Right cardiac atrium (tissue), 5 donors: ENCODE measurements at regions of chr1 and their contacts with region 1.

Region 1: GRCh38 chr1:165914136-165914798 is 86.9 kb downstream of the UCK2 start:
- DNase-seq: no peak
- ATAC-seq: peak; percentile 71 to 77
- H3K4me3 ChIP-seq: no peak overlapping the region
- H3K27ac ChIP-seq: no peak overlapping the region
- H3K4me1 ChIP-seq: no peaks in the 10 kb centered on the region
- H3K27me3 ChIP-seq: no peaks in the 10 kb centered on the region

Region 2: GRCh38 chr1:165383067-165383466 is 531.2 kb before region 1 on chr1:
- intact Hi-C with region 1: loop called in 1 of 4 experiments (anchors 10 kb)
- DNase-seq: peak; percentile 57 to 70 (median 67)
- ATAC-seq: peak; percentile 70 to 78
- H3K4me3 ChIP-seq: no peak overlapping the region
- H3K27ac ChIP-seq: no peak overlapping the region
- H3K4me1 ChIP-seq: no peaks in the 10 kb centered on the region
- H3K27me3 ChIP-seq: no peaks in the 10 kb centered on the region

Region 3: DNA sequence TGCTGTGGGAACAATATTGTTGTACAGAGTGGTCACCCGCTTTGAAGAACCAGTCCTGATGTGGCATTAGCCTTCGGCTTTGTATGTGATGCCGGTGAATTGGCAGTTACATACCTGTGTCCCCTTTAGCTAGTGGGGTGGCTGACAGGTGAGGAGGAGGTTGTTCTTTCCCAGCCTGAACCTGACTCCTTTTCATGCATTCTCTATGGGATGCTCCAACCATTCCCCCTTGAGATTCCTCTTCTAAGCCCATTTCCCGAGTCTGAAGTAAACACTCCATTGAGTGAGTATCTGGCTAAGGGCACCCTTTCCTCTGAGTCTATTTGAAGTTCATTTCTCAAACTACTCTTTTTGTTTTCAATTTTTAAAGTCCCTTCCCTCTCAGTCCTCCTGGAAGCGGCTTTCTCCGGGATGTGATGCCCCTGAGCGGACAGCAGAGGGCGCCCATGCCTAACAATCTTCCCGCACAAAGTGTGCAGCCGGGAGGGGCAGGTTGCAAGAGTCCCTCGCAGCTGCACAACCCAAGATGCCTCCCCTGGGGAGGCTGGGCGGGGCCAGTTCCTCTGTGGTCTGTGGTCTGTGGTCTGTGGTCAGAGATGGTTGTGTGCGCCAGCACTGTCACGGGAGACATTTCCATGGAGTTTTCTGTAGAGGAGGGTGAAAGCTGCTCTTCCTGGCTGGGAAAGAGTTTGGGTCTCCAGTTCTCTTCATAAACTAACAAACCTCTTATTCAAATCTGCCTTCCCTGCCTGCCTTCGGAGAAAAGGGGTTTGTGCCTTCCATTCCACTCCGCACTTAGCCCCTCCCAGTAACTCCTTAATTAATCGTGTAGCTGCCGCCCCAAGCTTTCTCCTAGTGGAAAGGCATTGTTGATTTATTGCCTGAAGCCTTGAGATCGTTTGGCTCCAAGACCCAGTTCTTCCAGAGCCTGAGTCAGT is 521.4 kb before region 1 on chr1:
- intact Hi-C with region 1: loop called (anchors 10 kb)
- DNase-seq: peak; percentile 85 to 92 (median 91)
- ATAC-seq: peak; percentile 89 to 92
- H3K4me3 ChIP-seq: no peak overlapping the region
- H3K27ac ChIP-seq: no peak overlapping the region
- H3K4me1 ChIP-seq: no peaks in the 10 kb centered on the region
- H3K27me3 ChIP-seq: no peaks in the 10 kb centered on the region

Region 4: GRCh38 chr1:165600793-165601192 is 313.5 kb before region 1 on chr1:
- intact Hi-C with region 1: loop called (anchors 2 to 10 kb)
- DNase-seq: no peak
- ATAC-seq: no peak
- H3K4me3 ChIP-seq: no peak overlapping the region
- H3K27ac ChIP-seq: no peak overlapping the region
- H3K4me1 ChIP-seq: no peaks in the 10 kb centered on the region
- H3K27me3 ChIP-seq: no peaks in the 10 kb centered on the region

Region 5: GRCh38 chr1:165717918-165718515 is 196.2 kb before region 1 on chr1:
- intact Hi-C with region 1: loop called (anchors 5 to 10 kb)
- DNase-seq: no peak
- ATAC-seq: no peak
- H3K4me3 ChIP-seq: no peak overlapping the region
- H3K27ac ChIP-seq: no peak overlapping the region
- H3K4me1 ChIP-seq: no peaks in the 10 kb centered on the region
- H3K27me3 ChIP-seq: no peaks in the 10 kb centered on the region